Heart left ventricle (tissue), 16 donors: ENCODE measurements at regions of chr17 and their contacts with region 1.

Region 1: DNA sequence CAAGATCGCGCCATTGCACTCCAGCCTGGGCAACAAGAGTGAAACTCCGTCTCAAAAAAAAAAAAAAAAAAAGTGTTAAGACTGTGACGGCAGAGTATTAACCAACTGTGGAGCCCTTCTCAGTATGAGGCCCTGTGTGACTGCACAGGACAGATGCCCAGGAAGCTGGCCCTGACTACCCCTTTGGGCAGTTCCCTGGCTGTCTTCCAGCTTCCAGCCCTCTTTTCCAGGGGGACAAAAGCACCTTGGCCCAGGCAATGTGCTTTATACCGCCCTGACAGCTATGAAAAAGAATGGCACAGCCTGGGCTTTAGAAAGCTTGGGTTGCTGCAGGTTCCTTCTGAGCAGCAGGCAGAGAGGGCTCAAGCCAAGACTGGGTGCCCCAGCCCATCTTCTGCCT is 61.2 kb downstream of the AKAP1 start:
- DNase-seq: no peak
- ATAC-seq: no peak
- H3K4me3 ChIP-seq: no peak overlapping the region
- H3K27ac ChIP-seq: no peak overlapping the region
- H3K4me1 ChIP-seq: no peaks in the 10 kb centered on the region
- H3K27me3 ChIP-seq: no peaks in the 10 kb centered on the region
- CTCF ChIP-seq: no peak
- POLR2A ChIP-seq: no peak

Region 2: DNA sequence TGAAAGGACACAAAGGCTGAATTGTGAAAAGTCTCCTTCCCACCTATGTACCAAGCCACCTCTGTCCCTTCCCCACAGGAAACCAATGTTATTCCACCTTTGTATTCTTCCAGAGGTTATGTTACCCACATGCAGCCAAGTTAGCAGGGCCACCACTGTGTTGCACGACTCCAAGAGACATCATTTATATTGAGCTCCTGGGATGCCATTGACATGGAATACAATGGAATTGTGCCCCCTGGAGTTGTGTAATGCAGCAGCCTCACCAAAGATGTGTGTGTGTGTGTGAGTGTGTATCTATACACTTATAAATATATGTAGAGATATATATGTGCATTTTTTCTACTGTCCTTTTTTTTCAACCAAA is 88.5 kb after region 1 on chr17:
- intact Hi-C with region 1: loop called in 1 of 10 experiments (anchors 5 kb)
- DNase-seq: no peak
- ATAC-seq: no peak
- H3K4me3 ChIP-seq: no peak overlapping the region
- H3K27ac ChIP-seq: no peak overlapping the region
- H3K4me1 ChIP-seq: no peaks in the 10 kb centered on the region
- H3K27me3 ChIP-seq: peaks cover 0 to 4% (median 0%) of the 10 kb centered on the region in 9 donors
- CTCF ChIP-seq: no peak
- POLR2A ChIP-seq: no peak